Activated T-helper 1 cell treated with anti-CD3 and anti-CD28 coated beads, Interleukin-12 subunit alpha, Interleukin-12 subunit beta, Interleukin-2, Interleukin-4 antibody, amounts not matched to agents 30 ng/mL and 10 ng/mL and 1 ng/mL, durations not matched to agents 14 hours and 24 hours and 36 hours (primary cell): ENCODE measurements at regions of chr10 and their contacts with region 1.

Region 1: DNA sequence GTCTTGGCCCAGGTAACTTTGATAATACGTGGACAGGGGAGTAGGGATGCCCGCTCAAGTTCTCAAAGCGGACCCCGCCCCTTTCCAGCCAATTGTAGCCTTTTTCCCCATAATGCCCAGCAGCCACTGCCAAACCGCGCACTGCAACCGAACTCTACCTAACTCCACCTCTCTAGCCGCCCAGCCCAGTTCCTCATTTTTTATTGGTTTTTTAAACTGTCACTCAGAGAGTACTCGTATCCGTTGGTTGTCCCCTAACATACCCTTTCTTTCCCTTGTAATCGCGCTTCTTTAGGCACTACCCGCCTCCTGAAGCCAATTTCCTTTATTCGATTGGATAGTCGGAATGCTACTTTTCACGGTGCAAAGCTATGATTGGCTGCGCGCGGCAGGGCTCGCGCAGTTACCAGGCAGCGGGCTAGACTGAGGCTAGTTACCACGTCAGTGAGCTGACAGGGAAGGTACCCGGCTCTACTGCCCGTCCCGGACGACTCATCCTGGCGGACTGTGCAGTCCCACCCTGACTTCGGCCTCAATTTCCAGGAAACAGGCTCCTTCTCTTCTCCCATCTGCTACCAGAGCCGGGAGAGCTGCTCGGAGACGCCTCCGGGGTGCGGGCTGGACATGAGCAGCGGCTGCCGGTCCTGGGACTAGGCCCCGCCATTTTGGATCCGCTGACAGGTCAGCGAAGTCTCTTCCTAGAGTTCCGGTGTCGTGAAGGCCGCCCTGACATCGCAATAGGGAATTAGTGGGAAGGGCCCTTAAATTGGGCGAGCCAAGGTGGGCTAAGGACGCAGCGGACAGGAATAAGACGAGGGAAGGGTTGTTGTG is at the start of gene GBF1:
- DNase-seq: peak; percentile 90
- H3K4me3 Mint-ChIP-seq: peak within 1 kb of the TSS; percentile 96
- H3K27ac Mint-ChIP-seq: peak within 1 kb of the TSS; percentile 91
- H3K4me1 Mint-ChIP-seq: peaks cover 38% of the 10 kb centered on the region
- H3K27me3 Mint-ChIP-seq: peaks cover 9% of the 10 kb centered on the region
- total RNA-seq, gene GBF1: 46.7 TPM in 2 replicates

Region 2: GRCh38 chr10:102151774-102152544 is 93.4 kb before region 1 on chr10 and contains the start of gene NOLC1:
- intact Hi-C with region 1: loop called (anchors 1 kb)
- DNase-seq: peak; percentile 100
- H3K4me3 Mint-ChIP-seq: peak within 1 kb of the TSS; percentile 98
- H3K27ac Mint-ChIP-seq: peak within 1 kb of the TSS; percentile 98
- H3K4me1 Mint-ChIP-seq: peaks cover 28% of the 10 kb centered on the region
- H3K27me3 Mint-ChIP-seq: no peaks in the 10 kb centered on the region
- total RNA-seq, gene NOLC1: 260 and 271 TPM in 2 replicates

Region 3: GRCh38 chr10:102231357-102232318 is 13.7 kb before region 1 on chr10:
- intact Hi-C with region 1: loop called (anchors 1 kb)
- DNase-seq: peak; percentile 65
- H3K4me3 Mint-ChIP-seq: peak overlapping the region; percentile 68
- H3K27ac Mint-ChIP-seq: no peak overlapping the region
- H3K4me1 Mint-ChIP-seq: peaks cover 10% of the 10 kb centered on the region
- H3K27me3 Mint-ChIP-seq: peaks cover 58% of the 10 kb centered on the region

Region 4: GRCh38 chr10:102420810-102421644 is 175.7 kb after region 1 on chr10 and contains the start of gene FBXL15:
- intact Hi-C with region 1: loop called (anchors 1 kb)
- DNase-seq: peak; percentile 96
- H3K4me3 Mint-ChIP-seq: peak within 1 kb of the TSS; percentile 99
- H3K27ac Mint-ChIP-seq: peak within 1 kb of the TSS; percentile 98
- H3K4me1 Mint-ChIP-seq: peaks cover 34% of the 10 kb centered on the region
- H3K27me3 Mint-ChIP-seq: peaks cover 9% of the 10 kb centered on the region
- total RNA-seq, gene FBXL15: 14.5 and 18.5 TPM in 2 replicates

Region 5: GRCh38 chr10:102461187-102462054 is 216.1 kb after region 1 on chr10:
- intact Hi-C with region 1: loop called (anchors 1 kb)
- DNase-seq: peak; percentile 91
- H3K4me3 Mint-ChIP-seq: peak overlapping the region; percentile 94
- H3K27ac Mint-ChIP-seq: peak overlapping the region; percentile 87
- H3K4me1 Mint-ChIP-seq: peaks cover 26% of the 10 kb centered on the region
- H3K27me3 Mint-ChIP-seq: peaks cover 1% of the 10 kb centered on the region